Activated naive CD4-positive, alpha-beta T cell treated with anti-CD3 and anti-CD28 coated beads for 36 hours (primary cell): ENCODE measurements at regions of chr1 and their contacts with region 1.

Region 1: GRCh38 chr1:234772345-234773147 is 162.6 kb upstream of the IRF2BP2 start:
- DNase-seq: peak; percentile 97
- H3K4me3 Mint-ChIP-seq: peak overlapping the region; percentile 61
- H3K27ac Mint-ChIP-seq: peak overlapping the region; percentile 92
- H3K4me1 Mint-ChIP-seq: peaks cover 59% of the 10 kb centered on the region
- H3K27me3 Mint-ChIP-seq: no peaks in the 10 kb centered on the region

Region 2: GRCh38 chr1:234533975-234534876 is 238.3 kb before region 1 on chr1:
- CTCF ChIA-PET with region 1: no interaction called
- intact Hi-C with region 1: no loop called
- DNase-seq: no peak
- H3K4me3 Mint-ChIP-seq: no peak overlapping the region
- H3K27ac Mint-ChIP-seq: no peak overlapping the region
- H3K4me1 Mint-ChIP-seq: no peaks in the 10 kb centered on the region
- H3K27me3 Mint-ChIP-seq: no peaks in the 10 kb centered on the region

Region 3: DNA sequence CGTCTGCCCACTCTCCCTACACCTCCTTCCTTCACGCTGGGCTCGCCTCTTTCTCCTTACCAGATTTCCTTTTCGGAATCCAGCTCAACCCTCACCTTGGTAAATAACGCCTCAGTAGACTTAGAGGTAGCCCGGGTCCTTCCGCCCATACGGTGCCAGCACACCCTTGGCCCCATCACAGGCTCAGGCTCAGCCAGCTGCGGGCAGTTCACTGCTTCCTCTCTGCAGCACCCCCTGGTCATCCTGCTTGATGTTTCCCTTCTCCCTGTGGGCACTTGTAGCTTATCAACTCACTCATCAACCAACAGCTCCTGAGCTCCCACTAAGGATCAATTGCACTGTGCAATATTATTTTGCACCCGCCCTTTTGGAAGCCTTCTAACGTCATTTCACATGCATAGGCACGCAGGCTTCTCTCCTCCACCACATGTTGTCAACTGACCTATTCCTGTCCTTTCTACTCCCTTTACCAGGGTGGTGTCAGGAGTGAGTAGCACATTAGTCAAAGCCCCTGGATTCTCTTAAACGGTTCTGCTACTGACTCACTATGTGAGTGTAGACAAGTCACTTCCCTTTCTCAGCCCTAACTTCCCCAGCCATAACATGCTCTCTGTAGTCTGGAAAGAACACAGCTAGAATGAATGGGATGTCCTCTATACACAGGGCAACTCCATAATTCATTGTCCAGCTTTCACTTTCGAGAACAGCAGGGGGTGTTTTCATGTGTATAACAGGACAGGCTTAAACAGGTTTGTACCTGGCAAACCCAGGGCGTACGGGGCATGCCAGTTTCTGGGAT is 115.5 kb before region 1 on chr1:
- CTCF ChIA-PET with region 1: no interaction called
- intact Hi-C with region 1: loop called (anchors 2 kb)
- DNase-seq: peak; percentile 55
- H3K4me3 Mint-ChIP-seq: no peak overlapping the region
- H3K27ac Mint-ChIP-seq: no peak overlapping the region
- H3K4me1 Mint-ChIP-seq: peaks cover 13% of the 10 kb centered on the region
- H3K27me3 Mint-ChIP-seq: no peaks in the 10 kb centered on the region

Region 4: GRCh38 chr1:234743791-234744611 is 28.5 kb before region 1 on chr1:
- CTCF ChIA-PET with region 1: no interaction called
- intact Hi-C with region 1: no loop called
- DNase-seq: no peak
- H3K4me3 Mint-ChIP-seq: no peak overlapping the region
- H3K27ac Mint-ChIP-seq: no peak overlapping the region
- H3K4me1 Mint-ChIP-seq: no peaks in the 10 kb centered on the region
- H3K27me3 Mint-ChIP-seq: no peaks in the 10 kb centered on the region

Region 5: GRCh38 chr1:234881893-234882771 is 109.6 kb after region 1 on chr1:
- CTCF ChIA-PET with region 1: no interaction called
- intact Hi-C with region 1: loop called (anchors 1 kb)
- DNase-seq: peak; percentile 40
- H3K4me3 Mint-ChIP-seq: no peak overlapping the region
- H3K27ac Mint-ChIP-seq: peak overlapping the region; percentile 33
- H3K4me1 Mint-ChIP-seq: peaks cover 37% of the 10 kb centered on the region
- H3K27me3 Mint-ChIP-seq: no peaks in the 10 kb centered on the region

Region 6: DNA sequence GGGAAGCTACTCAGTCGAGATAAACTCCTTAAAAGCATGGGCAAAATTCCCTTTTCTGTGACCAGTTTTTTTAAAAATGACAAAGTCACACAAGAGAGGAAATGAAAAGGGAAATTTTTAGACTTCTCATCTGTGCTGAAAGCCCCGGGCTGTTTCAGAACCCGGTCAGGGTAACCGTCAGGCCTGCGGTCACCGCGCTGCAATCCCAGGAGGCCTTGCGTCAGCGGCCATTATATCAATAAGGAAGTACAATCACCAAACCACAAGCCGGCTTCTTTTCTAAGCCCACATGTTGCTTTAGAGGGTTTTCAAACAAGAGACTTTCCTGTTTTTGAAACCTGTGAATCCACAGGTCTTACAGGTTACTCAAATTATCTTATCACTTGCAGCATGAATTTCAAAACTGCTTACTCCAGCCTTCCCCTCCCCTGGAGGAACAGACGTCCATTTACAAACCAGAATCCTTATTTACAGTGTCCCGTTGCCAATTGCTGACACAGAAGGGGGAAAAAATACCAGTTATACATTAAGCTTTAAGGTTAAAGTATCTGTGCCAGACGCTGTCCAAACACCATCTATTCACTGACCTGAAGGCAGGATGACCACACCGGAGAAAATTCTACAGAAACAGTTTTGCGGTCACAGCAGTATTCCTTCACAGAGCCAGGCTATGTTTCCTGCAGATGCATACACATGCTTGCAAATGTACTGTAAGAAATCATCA is 190.8 kb after region 1 on chr1:
- CTCF ChIA-PET with region 1: interaction called, 3 read pairs
- intact Hi-C with region 1: loop called (anchors 2 kb)
- DNase-seq: peak; percentile 98
- H3K4me3 Mint-ChIP-seq: peak overlapping the region; percentile 35
- H3K27ac Mint-ChIP-seq: peak overlapping the region; percentile 97
- H3K4me1 Mint-ChIP-seq: peaks cover 72% of the 10 kb centered on the region
- H3K27me3 Mint-ChIP-seq: no peaks in the 10 kb centered on the region

Region 7: GRCh38 chr1:235075188-235075926 is 302.8 kb after region 1 on chr1:
- CTCF ChIA-PET with region 1: no interaction called
- intact Hi-C with region 1: loop called (anchors 2 kb)
- DNase-seq: peak; percentile 83
- H3K4me3 Mint-ChIP-seq: peak overlapping the region; percentile 0
- H3K27ac Mint-ChIP-seq: peak overlapping the region; percentile 90
- H3K4me1 Mint-ChIP-seq: peaks cover 36% of the 10 kb centered on the region
- H3K27me3 Mint-ChIP-seq: no peaks in the 10 kb centered on the region